ENCODE measurements at regions of chr7 and their contacts with region 1.

Region 1: GRCh38 chr7:47818796-47819606 is 129.3 kb downstream of the PKD1L1 start:
- DNase-seq: peak; percentile 80
- H3K4me3 ChIP-seq: no peak overlapping the region
- H3K27ac ChIP-seq: no peak overlapping the region
- H3K4me1 ChIP-seq: peaks cover 9% of the 10 kb centered on the region
- CTCF ChIP-seq: peak; percentile 100

Region 2: DNA sequence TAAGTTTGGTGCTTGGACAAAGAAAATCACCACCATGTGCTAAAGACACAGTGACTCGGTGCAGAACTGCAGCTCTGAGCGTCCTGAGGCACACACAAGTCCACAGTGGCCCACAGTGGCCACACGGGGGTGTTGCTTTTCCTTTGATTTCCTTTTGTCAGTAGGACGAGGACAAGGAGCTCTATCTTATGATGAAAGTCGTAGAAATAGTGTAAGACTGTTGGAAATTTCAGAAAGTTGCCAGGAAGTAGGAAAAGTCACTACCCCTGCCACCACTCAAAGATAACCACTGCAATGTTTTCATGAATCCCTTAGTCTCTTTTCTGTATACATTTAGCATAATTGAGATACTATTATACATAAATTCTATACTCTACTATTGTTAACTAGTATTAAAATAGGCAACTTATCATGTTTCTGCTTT is 383.1 kb before region 1 on chr7:
- CTCF ChIA-PET with region 1: no interaction called
- POLR2A ChIA-PET with region 1: no interaction called
- intact Hi-C with region 1: loop called (anchors 1 kb)
- DNase-seq: peak; percentile 66
- H3K4me3 ChIP-seq: no peak overlapping the region
- H3K27ac ChIP-seq: no peak overlapping the region
- H3K4me1 ChIP-seq: no peaks in the 10 kb centered on the region
- CTCF ChIP-seq: peak; percentile 78

Region 3: GRCh38 chr7:47482013-47482875 is 336.8 kb before region 1 on chr7:
- CTCF ChIA-PET with region 1: interaction called, 5 read pairs
- POLR2A ChIA-PET with region 1: no interaction called
- intact Hi-C with region 1: loop called (anchors 2 kb)
- DNase-seq: no peak
- H3K4me3 ChIP-seq: no peak overlapping the region
- H3K27ac ChIP-seq: no peak overlapping the region
- H3K4me1 ChIP-seq: peaks cover 33% of the 10 kb centered on the region
- CTCF ChIP-seq: no peak

Region 4: GRCh38 chr7:47581806-47582763 is 236.9 kb before region 1 on chr7 and contains the start of gene TNS3:
- CTCF ChIA-PET with region 1: no interaction called
- POLR2A ChIA-PET with region 1: no interaction called
- intact Hi-C with region 1: loop called (anchors 2 kb)
- DNase-seq: peak; percentile 71
- H3K4me3 ChIP-seq: peak within 1 kb of the TSS; percentile 87
- H3K27ac ChIP-seq: peak within 1 kb of the TSS; percentile 16
- H3K4me1 ChIP-seq: peaks cover 61% of the 10 kb centered on the region
- CTCF ChIP-seq: peak; percentile 41; the same call in 1 of the 2 replicates
- total RNA-seq, gene TNS3: 8.3 and 9.5 TPM in 2 replicates

Region 5: GRCh38 chr7:47720141-47720906 is 98.7 kb before region 1 on chr7:
- CTCF ChIA-PET with region 1: no interaction called
- POLR2A ChIA-PET with region 1: no interaction called
- intact Hi-C with region 1: loop called (anchors 5 kb)
- DNase-seq: peak; percentile 36
- H3K4me3 ChIP-seq: no peak overlapping the region
- H3K27ac ChIP-seq: no peak overlapping the region
- H3K4me1 ChIP-seq: peaks cover 75% of the 10 kb centered on the region
- CTCF ChIP-seq: no peak